ENCODE measurements at regions of chr12 and their contacts with region 1.

Region 1: GRCh38 chr12:118061011-118061875 is at the start of gene WSB2:
- DNase-seq: peak in 1 of 2 experiments; percentile 70
- H3K4me3 ChIP-seq: peak within 1 kb of the TSS; percentile 87 to 93 (median 91)
- H3K27ac ChIP-seq: peak within 1 kb of the TSS; percentile 85
- H3K4me1 ChIP-seq: peaks cover 3 to 10% (median 7%) of the 10 kb centered on the region in 4 experiments; a peak in 6 of 7 replicates
- H3K27me3 ChIP-seq: no peaks in the 10 kb centered on the region
- CTCF ChIP-seq: no peak
- EP300 ChIP-seq: no peak
- POLR2A ChIP-seq: peak in 1 of 2 experiments; percentile 5; a peak in 1 of 3 replicates
- RAD21 ChIP-seq: no peak
- total RNA-seq, gene WSB2: 58.2 and 70.0 TPM in 2 replicates

Region 2: DNA sequence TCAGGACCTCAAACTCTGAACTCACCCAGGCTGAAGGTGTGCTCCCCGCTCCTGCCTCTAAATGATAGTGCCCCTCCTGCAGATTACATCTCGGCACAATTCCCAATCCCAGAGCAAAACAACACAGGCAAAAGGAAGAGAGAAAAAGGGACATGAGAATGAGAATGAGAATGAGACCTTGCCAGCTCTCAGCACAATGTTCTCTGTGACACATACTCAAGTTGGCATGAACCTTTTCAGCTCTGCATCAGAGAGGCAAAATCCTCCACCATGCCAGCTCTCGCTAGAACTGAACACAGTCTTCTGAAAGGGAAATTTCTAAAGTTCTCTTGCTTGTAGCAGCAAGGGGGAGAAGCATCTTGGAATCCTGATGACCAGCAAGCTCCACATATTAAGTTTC is 177.1 kb before region 1 on chr12:
- CTCF ChIA-PET with region 1: no interaction called
- POLR2A ChIA-PET with region 1: no interaction called
- DNase-seq: no peak
- H3K4me3 ChIP-seq: no peak overlapping the region
- H3K27ac ChIP-seq: no peak overlapping the region
- H3K4me1 ChIP-seq: no peaks in the 10 kb centered on the region
- H3K27me3 ChIP-seq: no peaks in the 10 kb centered on the region
- CTCF ChIP-seq: no peak
- EP300 ChIP-seq: no peak
- POLR2A ChIP-seq: no peak
- RAD21 ChIP-seq: no peak

Region 3: DNA sequence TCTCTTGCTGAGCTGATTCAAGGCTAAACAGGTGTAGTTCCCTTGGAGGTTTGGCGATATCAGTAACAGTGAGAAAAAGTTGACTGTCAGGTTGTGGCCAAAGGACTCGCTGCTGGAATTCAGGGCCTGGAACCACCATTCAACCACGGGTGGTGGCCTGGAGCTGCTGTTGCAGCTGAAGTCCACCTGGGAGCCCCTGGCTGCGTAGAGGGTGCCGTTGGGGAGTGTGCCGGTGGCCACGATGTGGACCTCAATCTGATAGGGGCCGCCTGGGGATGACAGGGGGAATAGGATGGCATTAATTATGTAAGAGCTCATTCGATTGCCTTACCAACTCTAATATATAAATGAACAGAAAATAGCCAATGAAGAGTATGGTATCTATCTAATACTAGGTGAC is 20.9 kb after region 1 on chr12:
- CTCF ChIA-PET with region 1: interaction called, 6 read pairs
- POLR2A ChIA-PET with region 1: interaction called, 106 read pairs
- DNase-seq: no peak
- H3K4me3 ChIP-seq: no peak overlapping the region
- H3K27ac ChIP-seq: no peak overlapping the region
- H3K4me1 ChIP-seq: no peaks in the 10 kb centered on the region
- H3K27me3 ChIP-seq: no peaks in the 10 kb centered on the region
- CTCF ChIP-seq: no peak
- EP300 ChIP-seq: no peak
- POLR2A ChIP-seq: no peak
- RAD21 ChIP-seq: no peak

Region 4: DNA sequence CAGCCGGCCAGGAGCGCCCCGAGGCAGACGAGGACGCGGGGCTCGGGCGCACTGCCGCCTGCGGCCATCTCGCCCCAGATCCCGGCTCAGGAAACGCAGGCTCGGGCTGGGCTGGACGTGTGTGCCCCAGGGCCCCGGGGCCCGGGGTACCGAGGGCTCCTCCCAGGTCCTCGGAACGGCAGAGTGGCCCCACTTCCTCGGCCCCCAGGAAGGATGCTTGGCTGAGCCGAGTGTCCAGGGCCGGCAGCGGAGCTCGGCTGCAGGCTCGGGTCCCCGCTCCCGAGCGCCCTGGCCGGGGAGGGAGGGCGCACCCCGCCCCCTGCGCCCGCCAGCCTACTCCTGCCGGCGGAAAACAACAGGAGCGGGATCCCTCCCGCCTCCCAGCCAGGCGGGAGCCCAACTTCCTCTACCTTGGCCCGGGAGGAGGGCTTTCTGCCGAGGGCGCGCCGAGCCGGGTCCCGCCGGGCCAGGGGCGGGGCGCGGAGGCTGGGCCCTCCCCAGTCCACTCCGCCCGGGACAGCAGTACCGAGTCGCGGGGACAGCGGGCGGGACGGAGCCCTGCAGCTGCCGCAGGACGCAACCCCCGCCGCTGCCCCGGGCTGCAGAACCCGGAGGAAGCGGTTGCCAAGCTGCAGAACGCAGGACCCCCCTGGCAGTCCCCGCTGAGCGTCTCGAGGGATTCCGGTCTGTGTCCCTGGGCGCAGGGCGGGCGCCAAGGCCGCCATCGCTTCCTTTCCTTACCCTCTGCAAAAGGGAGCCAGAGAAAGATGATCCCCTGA is 42.5 kb after region 1 on chr12 and contains the start of gene VSIG10:
- CTCF ChIA-PET with region 1: interaction called, 8 read pairs
- POLR2A ChIA-PET with region 1: interaction called, 103 read pairs
- DNase-seq: peak in 1 of 2 experiments; percentile 80
- H3K4me3 ChIP-seq: peak within 1 kb of the TSS; percentile 81 to 91 (median 87)
- H3K27ac ChIP-seq: peak within 1 kb of the TSS; percentile 91; the same call in 1 of the 2 replicates
- H3K4me1 ChIP-seq: peaks cover 0 to 9% (median 4%) of the 10 kb centered on the region in 4 experiments; a peak in 4 of 7 replicates
- H3K27me3 ChIP-seq: no peaks in the 10 kb centered on the region
- CTCF ChIP-seq: no peak
- EP300 ChIP-seq: no peak
- POLR2A ChIP-seq: no peak; a peak in 1 of 3 replicates
- RAD21 ChIP-seq: no peak
- total RNA-seq, gene VSIG10: 93.6 and 96.8 TPM in 2 replicates

Region 5: DNA sequence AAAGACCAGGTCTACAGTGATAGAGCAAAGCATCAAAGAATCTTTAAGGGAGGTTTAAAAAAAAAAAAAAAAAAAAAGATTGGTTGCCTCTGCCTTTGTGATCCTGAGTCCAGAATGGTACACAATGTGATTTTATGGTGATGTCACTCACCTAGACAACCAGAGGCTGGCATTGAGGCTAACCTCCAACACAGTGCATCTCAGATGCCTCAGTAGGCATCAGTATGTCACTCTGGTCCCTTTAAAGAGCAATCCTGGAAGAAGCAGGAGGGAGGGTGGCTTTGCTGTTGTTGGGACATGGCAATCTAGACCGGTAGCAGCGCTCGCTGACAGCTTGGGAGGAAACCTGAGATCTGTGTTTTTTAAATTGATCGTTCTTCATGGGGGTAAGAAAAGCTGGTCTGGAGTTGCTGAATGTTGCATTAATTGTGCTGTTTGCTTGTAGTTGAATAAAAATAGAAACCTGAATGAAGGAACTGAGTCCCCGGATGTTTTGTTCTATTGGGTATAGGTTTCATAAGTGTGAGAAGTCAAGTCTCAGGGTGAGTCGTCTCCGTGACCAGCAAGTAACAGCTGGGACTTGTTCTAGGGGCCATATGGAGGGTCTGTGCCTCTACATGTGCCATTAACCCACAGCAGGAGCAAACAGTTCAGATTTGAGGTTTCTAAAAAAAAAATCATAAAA is 84.0 kb after region 1 on chr12:
- CTCF ChIA-PET with region 1: interaction called, 10 read pairs
- POLR2A ChIA-PET with region 1: interaction called, 3 read pairs
- DNase-seq: no peak
- H3K4me3 ChIP-seq: no peak overlapping the region
- H3K27ac ChIP-seq: no peak overlapping the region
- H3K4me1 ChIP-seq: no peaks in the 10 kb centered on the region
- H3K27me3 ChIP-seq: no peaks in the 10 kb centered on the region
- CTCF ChIP-seq: no peak
- EP300 ChIP-seq: no peak
- POLR2A ChIP-seq: no peak
- RAD21 ChIP-seq: no peak